ENCODE measurements at regions of chr2 and their contacts with region 1.

Region 1: GRCh38 chr2:240232961-240233893 is 92.8 kb upstream of the OTOS start:
- DNase-seq: peak; percentile 79 to 99
- H3K4me3 ChIP-seq: peak overlapping the region; percentile 53
- H3K27ac ChIP-seq: no peak overlapping the region
- H3K4me1 ChIP-seq: peaks cover 11% of the 10 kb centered on the region; the same call in 1 of the 2 replicates
- H3K27me3 ChIP-seq: no peaks in the 10 kb centered on the region
- CTCF ChIP-seq: peak; percentile 98

Region 2: GRCh38 chr2:240217431-240218239 is 15.6 kb before region 1 on chr2:
- CTCF ChIA-PET with region 1: no interaction called
- POLR2A ChIA-PET with region 1: interaction called, 12 read pairs
- intact Hi-C with region 1: no loop called
- DNase-seq: no peak
- H3K4me3 ChIP-seq: no peak overlapping the region
- H3K27ac ChIP-seq: no peak overlapping the region
- H3K4me1 ChIP-seq: peaks cover 7% of the 10 kb centered on the region
- H3K27me3 ChIP-seq: peaks cover 7% of the 10 kb centered on the region
- CTCF ChIP-seq: no peak

Region 3: GRCh38 chr2:240387669-240388358 is 154.6 kb after region 1 on chr2:
- CTCF ChIA-PET with region 1: interaction called, 4 read pairs
- POLR2A ChIA-PET with region 1: interaction called, 17 read pairs
- intact Hi-C with region 1: loop called (anchors 1 kb)
- DNase-seq: peak; percentile 88 to 95
- H3K4me3 ChIP-seq: peak overlapping the region; percentile 48; the same call in 1 of the 2 replicates
- H3K27ac ChIP-seq: peak overlapping the region; percentile 75
- H3K4me1 ChIP-seq: peaks cover 27% of the 10 kb centered on the region
- H3K27me3 ChIP-seq: no peaks in the 10 kb centered on the region
- CTCF ChIP-seq: no peak

Region 4: GRCh38 chr2:240441331-240441992 is 208.2 kb after region 1 on chr2:
- CTCF ChIA-PET with region 1: interaction called, 17 read pairs
- POLR2A ChIA-PET with region 1: interaction called, 3 read pairs
- intact Hi-C with region 1: loop called (anchors 1 kb)
- DNase-seq: no peak
- H3K4me3 ChIP-seq: no peak overlapping the region
- H3K27ac ChIP-seq: no peak overlapping the region
- H3K4me1 ChIP-seq: peaks cover 21% of the 10 kb centered on the region
- H3K27me3 ChIP-seq: no peaks in the 10 kb centered on the region
- CTCF ChIP-seq: no peak

Region 5: GRCh38 chr2:240499309-240500301 is 266.4 kb after region 1 on chr2:
- CTCF ChIA-PET with region 1: interaction called, 12 read pairs
- POLR2A ChIA-PET with region 1: no interaction called
- intact Hi-C with region 1: loop called (anchors 1 kb)
- DNase-seq: no peak
- H3K4me3 ChIP-seq: no peak overlapping the region
- H3K27ac ChIP-seq: no peak overlapping the region
- H3K4me1 ChIP-seq: no peaks in the 10 kb centered on the region
- H3K27me3 ChIP-seq: no peaks in the 10 kb centered on the region
- CTCF ChIP-seq: no peak

Region 6: DNA sequence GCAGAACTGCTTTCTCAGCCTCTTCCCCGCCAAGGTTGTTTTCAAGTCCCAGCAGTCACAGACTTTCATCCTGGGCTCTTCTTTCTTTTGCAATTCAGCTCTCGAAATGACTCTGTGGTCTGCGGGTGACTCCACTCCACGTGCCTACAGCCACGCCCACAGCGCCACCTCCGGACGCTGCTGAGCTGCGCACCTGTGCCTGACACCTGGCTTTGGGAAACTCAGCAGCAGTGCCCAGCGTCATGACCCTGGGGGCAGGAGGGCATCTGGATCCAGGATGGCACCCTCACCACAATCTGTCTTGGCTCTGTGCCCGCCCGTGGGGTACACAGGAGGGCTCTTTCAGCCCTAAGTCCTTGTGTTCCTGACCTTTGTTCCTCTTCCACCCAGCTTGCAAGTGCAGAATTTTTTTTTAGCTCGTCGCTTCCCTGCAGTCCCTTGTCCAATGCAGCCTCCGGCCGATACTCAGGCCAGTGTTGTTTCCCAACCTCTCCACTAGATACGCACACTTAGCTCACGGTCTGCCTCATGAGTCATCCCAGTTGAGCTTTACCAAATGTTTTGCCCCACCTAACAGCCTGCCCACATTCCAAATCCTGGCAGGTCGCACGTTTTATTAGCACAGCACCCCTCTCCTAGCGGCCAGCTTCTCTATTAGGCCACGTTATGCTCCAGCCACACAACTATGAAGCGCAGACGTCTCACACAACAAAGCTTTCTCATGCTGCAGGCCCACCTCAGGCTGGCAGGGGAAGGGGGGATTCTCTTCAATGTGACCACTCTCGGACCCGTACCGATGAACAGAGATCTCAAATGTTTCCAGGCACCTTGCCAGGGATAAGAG is 346.8 kb after region 1 on chr2:
- CTCF ChIA-PET with region 1: interaction called, 10 read pairs
- POLR2A ChIA-PET with region 1: no interaction called
- intact Hi-C with region 1: no loop called
- DNase-seq: peak; percentile 97 to 99
- H3K4me3 ChIP-seq: peak overlapping the region; percentile 46; the same call in 1 of the 2 replicates
- H3K27ac ChIP-seq: peak overlapping the region; percentile 98
- H3K4me1 ChIP-seq: peaks cover 60% of the 10 kb centered on the region
- H3K27me3 ChIP-seq: no peaks in the 10 kb centered on the region
- CTCF ChIP-seq: peak; percentile 97